PC-3 (cell line): ENCODE measurements at regions of chr2 and their contacts with region 1.

Region 1: DNA sequence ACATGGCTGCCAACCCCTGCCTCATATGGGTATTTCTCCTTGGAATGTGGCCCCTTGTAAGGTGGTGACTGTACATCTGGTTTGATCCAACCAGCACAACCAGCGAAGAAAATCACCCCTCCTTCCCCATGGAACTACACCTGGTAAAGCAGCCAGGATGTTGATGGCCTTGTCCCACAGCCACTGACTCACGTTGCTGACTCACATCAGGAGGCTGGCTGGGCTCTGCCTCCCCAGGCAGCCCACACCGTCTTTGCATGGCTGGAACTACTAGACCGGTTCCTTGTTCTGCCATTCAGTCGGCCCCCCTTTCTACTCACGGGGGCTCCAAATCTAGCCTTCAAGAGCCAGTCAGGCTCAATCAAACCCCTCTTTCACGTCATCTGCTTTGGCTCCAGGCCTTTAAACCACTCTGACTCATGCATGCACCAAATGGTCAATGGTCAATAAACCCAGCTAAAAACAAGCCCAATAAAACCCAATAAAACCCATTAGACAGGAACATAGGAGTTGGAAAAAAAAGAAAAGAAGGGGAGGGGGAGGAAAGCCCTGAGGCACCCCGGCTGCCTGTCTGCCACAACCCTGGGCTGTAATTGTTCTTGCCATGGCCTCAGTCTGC is 114.8 kb downstream of the PLB1 start:
- DNase-seq: peak; percentile 99
- ATAC-seq: peak; percentile 87
- H3K4me3 ChIP-seq: no peak overlapping the region
- H3K27ac ChIP-seq: peak overlapping the region; percentile 94
- H3K4me1 ChIP-seq: peaks cover 53% of the 10 kb centered on the region
- H3K27me3 ChIP-seq: no peaks in the 10 kb centered on the region
- CTCF ChIP-seq: no peak

Region 2: GRCh38 chr2:28594289-28595108 is 16.2 kb before region 1 on chr2:
- CTCF ChIA-PET with region 1: interaction called, 3 read pairs
- POLR2A ChIA-PET with region 1: no interaction called
- intact Hi-C with region 1: loop called (anchors 2 kb)
- DNase-seq: peak; percentile 99
- ATAC-seq: peak; percentile 96
- H3K4me3 ChIP-seq: no peak overlapping the region
- H3K27ac ChIP-seq: peak overlapping the region; percentile 81
- H3K4me1 ChIP-seq: peaks cover 30% of the 10 kb centered on the region
- H3K27me3 ChIP-seq: no peaks in the 10 kb centered on the region
- CTCF ChIP-seq: peak; percentile 91

Region 3: GRCh38 chr2:28621172-28622100 is 10.7 kb after region 1 on chr2:
- CTCF ChIA-PET with region 1: no interaction called
- POLR2A ChIA-PET with region 1: no interaction called
- intact Hi-C with region 1: loop called (anchors 1 kb)
- DNase-seq: peak; percentile 92
- ATAC-seq: peak; percentile 98
- H3K4me3 ChIP-seq: peak overlapping the region; percentile 11; the same call in 1 of the 2 replicates
- H3K27ac ChIP-seq: peak overlapping the region; percentile 87
- H3K4me1 ChIP-seq: peaks cover 51% of the 10 kb centered on the region
- H3K27me3 ChIP-seq: no peaks in the 10 kb centered on the region
- CTCF ChIP-seq: peak; percentile 80

Region 4: DNA sequence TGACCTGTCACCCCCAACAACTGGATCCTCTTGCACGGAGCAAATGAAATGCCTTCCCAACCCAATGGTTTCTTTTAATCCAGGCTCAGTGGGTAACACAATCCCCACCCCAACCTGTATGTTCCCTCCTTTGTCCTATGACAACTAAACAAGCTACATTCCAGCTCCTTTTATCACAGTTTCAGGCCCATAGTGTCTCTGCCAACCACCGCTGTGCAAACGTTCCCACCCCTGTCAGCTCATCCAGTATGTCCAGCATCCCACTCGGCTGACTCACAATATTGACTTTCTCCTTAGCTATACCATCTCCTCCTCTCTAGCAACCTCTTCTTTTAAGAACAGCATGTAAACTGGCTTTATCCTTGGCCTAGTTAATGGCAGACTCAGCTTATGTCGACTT is 23.1 kb after region 1 on chr2:
- CTCF ChIA-PET with region 1: no interaction called
- POLR2A ChIA-PET with region 1: interaction called, 12 read pairs
- intact Hi-C with region 1: no loop called
- DNase-seq: peak; percentile 98
- ATAC-seq: peak; percentile 99
- H3K4me3 ChIP-seq: 0 out of 2 replicates have a peak overlapping the region, but pooled peaks have one; percentile 25
- H3K27ac ChIP-seq: peak overlapping the region; percentile 94
- H3K4me1 ChIP-seq: peaks cover 26% of the 10 kb centered on the region
- H3K27me3 ChIP-seq: no peaks in the 10 kb centered on the region
- CTCF ChIP-seq: no peak

Region 5: GRCh38 chr2:28643911-28644334 is 33.2 kb after region 1 on chr2:
- CTCF ChIA-PET with region 1: no interaction called
- POLR2A ChIA-PET with region 1: no interaction called
- intact Hi-C with region 1: loop called (anchors 1 kb)
- DNase-seq: peak; percentile 96
- ATAC-seq: peak; percentile 92
- H3K4me3 ChIP-seq: peak overlapping the region; percentile 28; the same call in 1 of the 2 replicates
- H3K27ac ChIP-seq: peak overlapping the region; percentile 96
- H3K4me1 ChIP-seq: peaks cover 68% of the 10 kb centered on the region
- H3K27me3 ChIP-seq: no peaks in the 10 kb centered on the region
- CTCF ChIP-seq: no peak

Region 6: GRCh38 chr2:28661589-28662001 is 50.9 kb after region 1 on chr2:
- CTCF ChIA-PET with region 1: no interaction called
- POLR2A ChIA-PET with region 1: interaction called, 4 read pairs
- intact Hi-C with region 1: loop called (anchors 5 kb)
- DNase-seq: peak; percentile 84
- ATAC-seq: peak; percentile 44
- H3K4me3 ChIP-seq: peak overlapping the region; percentile 23; the same call in 1 of the 2 replicates
- H3K27ac ChIP-seq: peak overlapping the region; percentile 88
- H3K4me1 ChIP-seq: peaks cover 52% of the 10 kb centered on the region
- H3K27me3 ChIP-seq: no peaks in the 10 kb centered on the region
- CTCF ChIP-seq: no peak

Region 7: GRCh38 chr2:28721601-28722191 is 111.0 kb after region 1 on chr2:
- CTCF ChIA-PET with region 1: no interaction called
- POLR2A ChIA-PET with region 1: interaction called, 14 read pairs
- intact Hi-C with region 1: no loop called
- DNase-seq: no peak
- ATAC-seq: no peak
- H3K4me3 ChIP-seq: no peak overlapping the region
- H3K27ac ChIP-seq: no peak overlapping the region
- H3K4me1 ChIP-seq: peaks cover 12% of the 10 kb centered on the region
- H3K27me3 ChIP-seq: no peaks in the 10 kb centered on the region
- CTCF ChIP-seq: no peak